ENCODE measurements at regions of chr14 and their contacts with region 1.

Region 1: DNA sequence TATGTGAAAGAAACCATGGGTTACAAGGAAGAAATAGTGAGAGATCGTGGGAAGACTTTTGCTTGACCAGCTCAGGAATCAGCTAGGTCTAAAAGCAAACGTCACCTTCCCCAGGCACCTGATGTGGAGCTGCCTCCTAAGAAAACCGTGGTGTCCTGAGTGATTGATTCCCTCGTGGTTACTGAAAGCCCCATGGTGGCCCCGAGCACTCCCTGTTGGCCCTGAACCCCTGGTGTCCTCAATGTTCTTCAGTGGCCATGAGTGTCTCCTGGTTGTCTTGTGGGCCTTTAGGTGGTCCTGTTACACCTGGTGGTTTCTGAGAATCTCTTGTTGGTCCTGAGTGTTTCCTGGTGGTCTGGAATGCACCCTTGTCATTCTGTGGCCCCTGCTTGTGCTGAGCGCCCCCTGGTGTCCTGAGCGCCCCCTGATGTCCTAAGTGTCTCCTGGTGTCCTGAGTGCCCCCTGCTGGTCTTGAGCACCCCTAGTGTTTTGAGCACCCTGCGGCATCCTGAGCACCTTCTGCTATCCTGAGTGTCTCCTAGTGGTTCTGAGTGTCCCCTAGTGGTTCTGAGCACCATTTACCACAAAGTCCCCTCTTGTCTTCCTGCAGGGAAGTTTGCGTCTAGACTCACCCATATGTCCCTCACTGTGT is 518.7 kb downstream of the TMEM121 start:
- DNase-seq: no peak

Region 2: DNA sequence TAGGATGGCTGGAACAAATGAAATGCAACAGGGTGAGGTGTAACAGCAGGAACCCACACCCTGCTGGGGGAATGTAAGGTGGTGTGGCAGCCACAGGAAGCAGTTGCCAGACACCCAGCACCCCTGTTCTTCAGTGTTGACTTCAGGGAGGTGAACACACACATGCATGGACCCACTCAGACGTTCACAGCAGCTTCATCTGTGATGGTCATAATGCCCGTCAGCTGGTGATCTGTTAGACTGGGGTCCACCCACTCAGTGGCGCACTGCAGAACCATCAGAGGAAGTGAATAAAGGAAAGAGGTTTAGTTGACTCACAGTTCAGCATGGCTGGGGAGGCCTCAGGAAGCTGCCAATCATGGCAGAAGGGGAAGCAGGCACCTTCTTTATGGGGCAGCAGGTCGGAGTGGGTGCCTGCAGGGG is 669.4 kb before region 1 on chr14:
- intact Hi-C with region 1: no loop called
- DNase-seq: no peak

Region 3: GRCh38 chr14:106010783-106011182 is 34.3 kb before region 1 on chr14:
- intact Hi-C with region 1: loop called in 1 of 2 experiments (anchors 1 kb)
- DNase-seq: no peak

Measured in posterior vena cava (tissue), 2 donors.